Colonic mucosa (tissue), 4 donors: ENCODE measurements at regions of chr2 and their contacts with region 1.

Region 1: DNA sequence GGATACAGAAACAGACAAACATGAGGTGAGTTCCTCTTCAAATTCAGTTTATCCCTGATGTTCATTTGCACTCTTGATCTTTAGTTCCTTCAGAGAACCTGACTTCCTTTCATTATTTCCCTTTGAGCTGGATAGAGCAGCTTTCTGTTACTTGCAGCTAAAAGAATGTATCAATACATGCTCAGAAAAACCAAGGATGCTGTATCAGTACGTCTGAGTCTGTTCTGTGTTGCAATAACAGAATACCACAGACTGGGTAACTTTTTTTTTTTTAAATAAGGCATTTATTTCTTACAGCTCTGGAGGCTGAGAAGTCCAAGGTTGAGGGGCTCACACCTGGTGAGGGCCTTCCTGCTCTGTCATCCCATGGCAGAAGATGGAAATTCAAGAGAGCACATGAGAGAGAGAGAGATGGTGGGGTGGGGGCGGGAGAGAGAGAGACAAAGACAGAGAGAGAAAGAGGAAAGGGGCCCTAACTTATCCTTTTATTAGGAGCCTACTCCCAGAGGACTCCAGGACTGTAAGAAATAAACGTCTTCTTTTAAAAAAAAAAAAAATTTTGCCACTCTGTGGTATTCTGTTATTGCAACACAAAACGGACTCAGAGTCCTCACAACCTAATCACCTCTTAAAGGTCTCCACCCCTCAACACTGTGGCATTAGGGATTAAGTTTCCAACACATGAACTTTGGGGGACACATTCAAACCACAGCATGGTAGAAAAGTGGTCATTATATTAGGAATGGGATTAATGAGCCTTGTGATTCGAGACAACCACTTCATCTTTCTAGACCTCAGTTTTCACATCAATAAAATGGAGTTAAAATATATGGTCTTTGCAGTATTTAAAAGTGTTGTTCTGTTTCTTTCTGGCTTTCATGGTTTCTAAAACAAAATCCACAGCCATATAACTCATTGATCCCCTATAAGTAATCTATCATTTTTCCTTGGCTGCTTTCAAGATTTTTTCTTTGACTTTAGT is 18.4 kb upstream of the SELENOI start:
- DNase-seq: no peak
- H3K4me3 ChIP-seq: no peak overlapping the region
- H3K27ac ChIP-seq: no peak overlapping the region
- H3K4me1 ChIP-seq: no peaks in the 10 kb centered on the region
- H3K27me3 ChIP-seq: no peaks in the 10 kb centered on the region
- CTCF ChIP-seq: no peak

Region 2: DNA sequence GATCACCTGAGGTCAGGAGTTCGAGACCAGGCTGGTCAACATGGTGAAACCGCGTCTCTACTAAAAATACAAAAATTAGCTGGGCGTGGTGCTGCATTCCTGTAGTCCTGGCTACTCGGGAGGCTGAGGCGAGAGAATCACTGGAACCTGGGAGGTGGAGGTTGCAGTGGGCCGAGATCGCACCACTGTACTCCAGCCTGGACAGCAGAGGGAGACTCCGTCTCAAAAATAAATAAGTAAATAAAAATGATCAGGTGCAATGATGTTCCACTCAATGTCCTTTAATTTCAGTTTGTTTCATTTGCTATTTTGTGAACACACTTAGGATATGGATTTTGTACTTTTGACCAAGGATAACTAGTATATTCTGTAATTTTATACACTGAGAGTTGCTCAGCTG is 92.5 kb before region 1 on chr2:
- intact Hi-C with region 1: loop called (anchors 10 kb)
- DNase-seq: no peak
- H3K4me3 ChIP-seq: no peak overlapping the region
- H3K27ac ChIP-seq: no peak overlapping the region
- H3K4me1 ChIP-seq: peaks cover 3% of the 10 kb centered on the region
- H3K27me3 ChIP-seq: no peaks in the 10 kb centered on the region
- CTCF ChIP-seq: no peak

Region 3: DNA sequence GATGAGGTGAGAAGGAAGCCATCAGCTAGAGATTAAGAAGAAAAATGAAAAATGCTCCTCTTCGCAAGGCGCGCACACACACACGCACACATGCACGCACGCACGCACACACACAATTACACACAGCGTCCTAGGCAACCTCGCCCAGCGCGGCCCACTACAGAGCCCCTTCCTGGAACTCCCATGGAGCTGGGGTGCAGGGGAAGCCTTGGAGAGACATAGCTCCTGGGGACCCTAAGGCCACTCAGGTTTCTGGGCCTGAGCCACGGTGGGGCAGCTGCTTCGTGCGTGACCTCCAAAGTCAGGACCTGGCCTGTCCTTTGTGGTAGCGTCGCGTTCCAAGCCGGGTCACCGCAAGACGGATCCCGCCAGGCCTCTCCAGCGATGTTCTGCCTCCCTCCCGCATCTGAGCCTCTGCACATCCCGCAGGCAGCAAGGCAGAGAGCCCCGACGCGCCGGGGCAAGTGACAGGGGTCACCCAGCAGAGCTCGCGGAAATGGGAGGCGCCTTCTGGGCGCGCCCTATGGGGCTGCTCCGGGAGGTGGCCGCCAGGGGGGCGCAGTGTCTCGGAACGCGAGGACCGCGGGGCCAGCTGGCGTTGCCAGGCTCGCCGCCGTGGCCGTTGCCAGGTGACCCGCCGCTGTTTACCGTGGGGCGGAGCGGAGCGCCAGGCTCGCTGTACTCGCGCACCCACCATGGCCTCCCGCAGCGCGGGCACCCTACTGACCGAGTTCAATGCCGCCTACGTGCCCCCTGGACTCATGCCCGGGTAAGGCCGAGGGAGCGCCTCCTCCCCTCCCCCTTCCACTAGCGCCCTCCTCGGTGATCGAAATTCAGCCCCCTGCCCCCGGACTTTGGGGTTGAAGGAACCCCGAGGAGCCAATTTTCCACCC is 234.6 kb after region 1 on chr2:
- intact Hi-C with region 1: no loop called
- DNase-seq: peak; percentile 60
- H3K4me3 ChIP-seq: peak overlapping the region; percentile 39
- H3K27ac ChIP-seq: no peak overlapping the region
- H3K4me1 ChIP-seq: peaks cover 5% of the 10 kb centered on the region
- H3K27me3 ChIP-seq: peaks cover 10% of the 10 kb centered on the region
- CTCF ChIP-seq: no peak